ENCODE measurements at regions of chr20 and their contacts with region 1.

Region 1: GRCh38 chr20:37192137-37192854 is 12.9 kb upstream of the MROH8 start:
- DNase-seq: peak; percentile 85
- H3K4me3 ChIP-seq: no peak overlapping the region
- H3K27ac ChIP-seq: no peak overlapping the region
- H3K4me1 ChIP-seq: no peaks in the 10 kb centered on the region
- H3K27me3 ChIP-seq: no peaks in the 10 kb centered on the region
- CTCF ChIP-seq: peak; percentile 84 to 92
- POLR2A ChIP-seq: no peak

Region 2: GRCh38 chr20:37178839-37179670 is 13.2 kb before region 1 on chr20 and contains the starts of genes MROH8 and RPN2:
- CTCF ChIA-PET with region 1: interaction called, 28 read pairs
- POLR2A ChIA-PET with region 1: interaction called, 7 read pairs
- dilution Hi-C with region 1: no loop called
- intact Hi-C with region 1: no loop called
- DNase-seq: peak; percentile 99
- H3K4me3 ChIP-seq: peak within 1 kb of the TSS; percentile 92 to 97 (median 96)
- H3K27ac ChIP-seq: peak within 1 kb of the TSS; percentile 94
- H3K4me1 ChIP-seq: peaks cover 15% of the 10 kb centered on the region
- H3K27me3 ChIP-seq: no peaks in the 10 kb centered on the region
- CTCF ChIP-seq: no peak
- POLR2A ChIP-seq: peak; percentile 57
- total RNA-seq, gene MROH8: 1.5 and 2.7 TPM in 2 replicates
- total RNA-seq, gene RPN2: 243 and 283 TPM in 2 replicates

Region 3: GRCh38 chr20:37223053-37223452 is 30.8 kb after region 1 on chr20:
- CTCF ChIA-PET with region 1: interaction called, 15 read pairs
- POLR2A ChIA-PET with region 1: no interaction called
- dilution Hi-C with region 1: no loop called
- intact Hi-C with region 1: no loop called
- DNase-seq: no peak
- H3K4me3 ChIP-seq: no peak overlapping the region
- H3K27ac ChIP-seq: no peak overlapping the region
- H3K4me1 ChIP-seq: no peaks in the 10 kb centered on the region
- H3K27me3 ChIP-seq: no peaks in the 10 kb centered on the region
- CTCF ChIP-seq: no peak
- POLR2A ChIP-seq: no peak

Region 4: DNA sequence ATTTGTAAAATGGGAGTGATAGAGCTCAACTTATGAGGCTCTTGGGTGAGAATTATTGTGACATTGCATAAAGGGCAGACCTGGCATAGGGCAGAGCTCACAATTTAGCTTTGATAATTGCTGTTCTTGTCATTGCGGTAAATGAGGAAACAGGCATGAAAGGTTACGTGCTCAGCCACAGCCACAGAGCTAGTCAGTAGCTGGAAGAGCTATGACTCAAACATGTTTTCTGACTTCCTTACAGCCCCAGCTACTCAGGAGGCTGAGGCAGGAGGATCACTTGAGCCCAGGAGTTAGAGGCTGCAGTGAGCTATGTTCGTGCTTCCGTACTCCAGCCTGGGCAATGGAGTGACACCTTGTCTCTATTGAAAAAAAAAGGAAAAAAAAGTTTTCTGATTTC is 72.9 kb after region 1 on chr20:
- CTCF ChIA-PET with region 1: interaction called, 13 read pairs
- POLR2A ChIA-PET with region 1: no interaction called
- dilution Hi-C with region 1: no loop called
- intact Hi-C with region 1: no loop called
- DNase-seq: no peak
- H3K4me3 ChIP-seq: no peak overlapping the region
- H3K27ac ChIP-seq: no peak overlapping the region
- H3K4me1 ChIP-seq: no peaks in the 10 kb centered on the region
- H3K27me3 ChIP-seq: peaks cover 5 to 7% of the 10 kb centered on the region in 2 experiments
- CTCF ChIP-seq: no peak
- POLR2A ChIP-seq: no peak

Region 5: DNA sequence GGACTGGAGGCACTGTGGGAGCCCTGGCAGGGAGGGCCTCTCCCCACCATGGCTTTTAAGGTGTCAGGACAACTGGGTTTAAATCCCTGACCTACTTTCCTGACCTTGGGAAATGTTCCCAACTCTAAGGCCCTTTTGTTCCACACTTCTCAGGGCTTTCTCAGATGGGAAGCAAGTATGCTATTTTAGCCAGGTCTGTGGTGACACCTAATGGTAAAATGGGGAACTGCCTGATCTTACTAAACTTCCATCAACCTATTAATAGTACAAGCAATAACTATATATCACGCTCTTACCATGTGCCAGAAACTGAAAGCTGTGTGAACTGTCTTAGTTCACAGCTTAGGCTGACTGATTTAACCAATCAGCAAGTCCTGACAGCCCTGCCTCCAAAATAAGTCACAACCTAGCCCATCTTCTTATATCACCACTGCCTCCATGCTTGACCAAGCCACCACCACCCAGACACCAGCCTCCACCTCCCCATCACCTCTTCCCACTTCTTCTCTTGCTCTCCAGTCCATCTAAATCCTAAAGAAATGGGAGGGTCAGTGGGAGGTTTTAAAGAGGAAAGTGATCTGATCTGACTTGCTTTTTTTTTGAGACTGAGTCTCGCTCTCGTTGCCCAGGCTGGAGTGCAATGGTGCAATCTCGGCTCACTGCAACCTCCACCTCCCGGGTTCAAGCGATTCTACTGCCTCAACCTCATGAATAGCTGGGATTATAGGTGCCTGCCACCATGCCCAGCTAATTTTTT is 342.3 kb after region 1 on chr20:
- CTCF ChIA-PET with region 1: interaction called, 54 read pairs
- POLR2A ChIA-PET with region 1: no interaction called
- dilution Hi-C with region 1: no loop called
- intact Hi-C with region 1: loop called (anchors 1 kb)
- DNase-seq: peak; percentile 95
- H3K4me3 ChIP-seq: no peak overlapping the region
- H3K27ac ChIP-seq: no peak overlapping the region
- H3K4me1 ChIP-seq: peaks cover 15% of the 10 kb centered on the region
- H3K27me3 ChIP-seq: no peaks in the 10 kb centered on the region
- CTCF ChIP-seq: peak; percentile 66 to 77
- POLR2A ChIP-seq: no peak

Measured in endothelial cell of umbilical vein (primary cell).